Activated B cell treated with CpG ODN at 0.5 μM for 24 hours (primary cell): ENCODE measurements at regions of chrX and their contacts with region 1.

Region 1: DNA sequence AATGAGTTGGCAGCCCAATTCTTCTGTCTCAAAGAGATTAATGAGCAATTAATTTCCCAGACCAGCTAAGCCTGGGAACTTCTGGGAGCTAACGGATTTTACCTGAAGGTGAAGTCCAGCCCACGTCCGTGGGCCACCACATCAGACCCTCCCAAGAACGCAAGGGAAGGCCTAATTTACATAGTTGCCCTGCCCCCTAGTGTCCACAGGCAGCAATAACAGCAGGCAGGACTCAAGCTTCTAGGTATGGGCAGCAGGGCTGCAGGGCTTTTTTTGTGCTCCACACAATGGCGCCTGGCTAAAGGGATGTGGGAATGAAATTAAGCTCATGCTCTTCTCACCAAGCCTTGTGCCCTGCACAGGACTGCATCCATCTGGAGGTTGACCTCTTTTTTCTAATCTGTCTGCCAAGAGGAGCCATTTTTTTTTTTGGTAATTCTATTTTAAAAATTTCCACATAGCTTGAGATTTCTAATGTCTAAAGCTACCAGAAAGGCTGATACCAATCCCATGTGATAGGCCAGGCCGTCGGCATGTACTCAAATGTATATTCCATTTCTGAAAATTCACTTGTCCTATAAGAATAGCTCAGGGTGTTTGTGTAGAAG is 111.9 kb upstream of the TMEM164 start:
- DNase-seq: no peak
- ATAC-seq: peak; percentile 65
- H3K4me3 Mint-ChIP-seq: no peak overlapping the region
- H3K27ac Mint-ChIP-seq: peak overlapping the region; percentile 79
- H3K4me1 Mint-ChIP-seq: peaks cover 32% of the 10 kb centered on the region
- H3K27me3 Mint-ChIP-seq: no peaks in the 10 kb centered on the region
- CTCF ChIP-seq: peak; percentile 44

Region 2: GRCh38 chrX:109536439-109537336 is 354.3 kb before region 1 on chrX and contains the start of gene NXT2:
- CTCF ChIA-PET with region 1: no interaction called
- POLR2A ChIA-PET with region 1: interaction called, 5 read pairs
- intact Hi-C with region 1: loop called (anchors 5 kb)
- DNase-seq: peak; percentile 69
- ATAC-seq: peak; percentile 98
- H3K4me3 Mint-ChIP-seq: peak within 1 kb of the TSS; percentile 94
- H3K27ac Mint-ChIP-seq: peak within 1 kb of the TSS; percentile 98
- H3K4me1 Mint-ChIP-seq: peaks cover 33% of the 10 kb centered on the region
- H3K27me3 Mint-ChIP-seq: no peaks in the 10 kb centered on the region
- CTCF ChIP-seq: no peak
- total RNA-seq, gene NXT2: 9.7 and 12.8 TPM in 2 replicates

Region 3: DNA sequence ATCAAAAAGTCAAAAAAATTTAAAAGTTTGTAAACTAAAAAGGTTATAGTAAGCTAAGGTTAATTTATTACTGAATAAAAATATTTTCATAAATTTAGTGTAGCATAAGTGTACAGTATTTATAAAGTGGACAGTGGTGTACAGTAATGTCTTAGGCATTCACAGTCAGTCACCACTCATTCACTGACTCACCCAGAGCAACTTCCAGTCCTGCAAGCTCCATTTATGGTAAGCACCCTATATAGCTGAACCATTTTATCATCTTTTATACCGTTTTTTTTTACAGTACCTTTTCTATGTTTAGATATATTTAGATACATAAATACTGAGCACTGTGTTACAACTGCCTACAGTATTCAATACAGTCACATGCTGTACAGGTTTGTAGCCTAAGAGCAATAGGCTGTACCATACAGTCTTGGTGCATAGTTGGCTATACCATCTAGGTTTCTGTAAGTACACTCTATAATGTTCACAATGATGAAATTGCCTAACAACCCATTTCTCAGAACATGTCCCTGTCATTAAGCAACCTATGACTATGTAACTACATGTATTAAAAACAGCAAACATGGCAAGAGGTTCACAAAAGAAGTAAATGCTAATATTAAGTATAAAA is 176.6 kb before region 1 on chrX:
- CTCF ChIA-PET with region 1: interaction called, 54 read pairs
- POLR2A ChIA-PET with region 1: no interaction called
- intact Hi-C with region 1: loop called (anchors 1 kb)
- DNase-seq: no peak
- ATAC-seq: no peak
- H3K4me3 Mint-ChIP-seq: no peak overlapping the region
- H3K27ac Mint-ChIP-seq: no peak overlapping the region
- H3K4me1 Mint-ChIP-seq: peaks cover 30% of the 10 kb centered on the region
- H3K27me3 Mint-ChIP-seq: no peaks in the 10 kb centered on the region
- CTCF ChIP-seq: no peak

Region 4: DNA sequence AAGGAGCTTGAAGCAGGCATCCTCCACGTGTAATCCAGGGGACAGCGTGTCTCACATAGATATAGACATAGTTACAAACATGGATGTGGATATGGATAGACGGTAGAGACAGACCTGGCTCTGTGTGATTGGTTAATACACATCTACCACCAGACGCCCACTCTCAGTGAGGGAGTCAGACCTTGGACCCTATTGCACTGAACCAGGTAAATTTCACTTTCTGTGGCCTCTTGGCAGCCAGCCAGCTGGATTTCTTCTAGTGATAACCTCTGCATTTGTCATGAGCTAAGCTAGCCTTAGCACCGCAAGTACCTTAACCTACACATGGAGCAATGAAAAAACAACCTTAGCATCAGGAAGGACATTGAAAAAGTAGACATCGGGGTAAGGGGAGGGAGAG is 78.8 kb before region 1 on chrX:
- CTCF ChIA-PET with region 1: no interaction called
- POLR2A ChIA-PET with region 1: no interaction called
- intact Hi-C with region 1: no loop called
- DNase-seq: no peak
- ATAC-seq: no peak
- H3K4me3 Mint-ChIP-seq: no peak overlapping the region
- H3K27ac Mint-ChIP-seq: no peak overlapping the region
- H3K4me1 Mint-ChIP-seq: no peaks in the 10 kb centered on the region
- H3K27me3 Mint-ChIP-seq: no peaks in the 10 kb centered on the region
- CTCF ChIP-seq: no peak

Region 5: GRCh38 chrX:109830704-109831206 is 60.2 kb before region 1 on chrX:
- CTCF ChIA-PET with region 1: no interaction called
- POLR2A ChIA-PET with region 1: no interaction called
- intact Hi-C with region 1: no loop called
- DNase-seq: no peak
- ATAC-seq: peak; percentile 28
- H3K4me3 Mint-ChIP-seq: no peak overlapping the region
- H3K27ac Mint-ChIP-seq: no peak overlapping the region
- H3K4me1 Mint-ChIP-seq: peaks cover 4% of the 10 kb centered on the region
- H3K27me3 Mint-ChIP-seq: no peaks in the 10 kb centered on the region
- CTCF ChIP-seq: no peak

Region 6: DNA sequence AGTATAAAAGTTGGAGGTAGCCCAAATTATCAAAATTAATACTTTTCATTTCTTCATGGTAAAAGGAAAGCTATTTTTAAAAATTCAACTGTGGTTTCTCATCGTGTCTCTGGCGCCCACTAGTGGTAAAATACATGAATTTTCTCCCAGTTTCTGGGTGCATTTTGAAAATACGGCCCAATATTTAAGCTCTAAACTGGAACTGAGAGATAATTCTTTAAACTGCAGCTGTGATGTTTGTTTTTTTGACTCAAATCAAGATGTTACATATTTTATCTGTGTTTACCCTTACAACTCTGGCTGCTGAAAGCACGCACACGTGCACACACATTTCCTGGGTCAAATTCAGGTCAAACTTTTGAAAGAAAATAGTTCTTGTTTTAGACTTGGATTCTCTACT is 34.0 kb before region 1 on chrX:
- CTCF ChIA-PET with region 1: interaction called, 15 read pairs
- POLR2A ChIA-PET with region 1: interaction called, 3 read pairs
- intact Hi-C with region 1: no loop called
- DNase-seq: no peak
- ATAC-seq: no peak
- H3K4me3 Mint-ChIP-seq: no peak overlapping the region
- H3K27ac Mint-ChIP-seq: no peak overlapping the region
- H3K4me1 Mint-ChIP-seq: peaks cover 7% of the 10 kb centered on the region
- H3K27me3 Mint-ChIP-seq: no peaks in the 10 kb centered on the region
- CTCF ChIP-seq: no peak

Region 7: GRCh38 chrX:109959356-109959871 is 68.4 kb after region 1 on chrX:
- CTCF ChIA-PET with region 1: no interaction called
- POLR2A ChIA-PET with region 1: no interaction called
- intact Hi-C with region 1: no loop called
- DNase-seq: no peak
- ATAC-seq: no peak
- H3K4me3 Mint-ChIP-seq: no peak overlapping the region
- H3K27ac Mint-ChIP-seq: no peak overlapping the region
- H3K4me1 Mint-ChIP-seq: no peaks in the 10 kb centered on the region
- H3K27me3 Mint-ChIP-seq: no peaks in the 10 kb centered on the region
- CTCF ChIP-seq: no peak

Region 8: DNA sequence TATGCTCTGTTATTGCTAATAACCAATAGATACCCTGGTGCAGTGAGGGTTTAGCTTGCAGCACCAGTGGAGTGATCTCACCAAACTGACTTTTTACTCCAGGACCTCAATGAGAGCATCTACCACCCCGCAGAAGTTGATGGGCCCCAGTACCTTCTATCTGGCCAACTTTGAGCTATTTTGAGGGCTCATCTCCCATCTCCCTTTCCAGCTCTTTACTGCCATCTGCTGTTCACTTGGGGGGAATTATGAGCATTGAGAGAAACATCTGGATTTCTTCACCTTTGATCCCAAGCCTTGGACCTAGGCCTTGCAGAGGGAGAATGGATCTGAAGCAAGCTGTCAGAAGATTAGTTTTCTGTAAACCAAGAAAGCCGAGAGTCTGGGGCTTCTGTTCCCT is 255.5 kb after region 1 on chrX:
- CTCF ChIA-PET with region 1: interaction called, 9 read pairs
- POLR2A ChIA-PET with region 1: no interaction called
- intact Hi-C with region 1: loop called (anchors 10 kb)
- DNase-seq: no peak
- ATAC-seq: peak; percentile 47
- H3K4me3 Mint-ChIP-seq: no peak overlapping the region
- H3K27ac Mint-ChIP-seq: no peak overlapping the region
- H3K4me1 Mint-ChIP-seq: peaks cover 7% of the 10 kb centered on the region
- H3K27me3 Mint-ChIP-seq: no peaks in the 10 kb centered on the region
- CTCF ChIP-seq: no peak